CD4-positive, alpha-beta T cell (primary cell): ENCODE measurements at regions of chr19 and their contacts with region 1.

Region 1: DNA sequence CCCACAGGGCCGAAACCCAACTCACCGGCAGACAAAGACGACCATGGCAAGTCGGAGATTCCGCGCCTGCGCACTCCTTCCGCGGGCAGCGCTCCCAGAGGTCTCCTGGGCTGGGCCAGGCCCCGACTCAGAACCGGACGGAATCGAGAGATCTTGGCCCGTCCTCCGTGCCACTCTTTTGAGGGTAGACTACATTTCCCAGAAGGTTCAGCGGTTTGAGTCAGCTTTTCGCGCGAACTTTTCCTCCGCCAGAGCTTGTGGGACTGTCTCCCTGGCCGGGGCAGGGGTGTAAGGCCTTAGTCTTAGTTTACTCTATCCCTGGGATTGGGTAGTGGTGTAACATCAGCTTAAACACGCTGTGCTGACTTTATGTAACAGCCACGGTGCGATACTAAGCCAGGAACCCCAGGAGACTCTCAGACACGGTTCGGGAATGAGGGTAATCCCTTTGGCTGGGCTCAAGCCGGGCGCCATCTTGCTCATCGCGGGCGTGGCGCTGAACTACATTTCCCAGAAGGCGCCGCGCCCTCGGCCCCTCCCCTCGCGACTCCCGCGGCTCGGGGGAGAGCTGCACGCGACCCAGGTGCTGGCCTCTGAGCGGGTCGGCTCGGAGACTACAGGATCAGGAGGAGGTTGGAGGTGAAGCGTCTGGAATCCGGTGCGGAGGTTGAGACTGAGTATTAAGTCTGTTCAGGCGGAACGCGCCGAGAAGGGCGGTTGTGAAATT is at the start of gene ZNF260:
- DNase-seq: peak; percentile 82 to 97 (median 88)
- ATAC-seq: peak; percentile 87
- H3K4me3 ChIP-seq: peak within 1 kb of the TSS; percentile 80
- H3K4me3 Mint-ChIP-seq: peak within 1 kb of the TSS; percentile 97
- H3K27ac ChIP-seq: peak within 1 kb of the TSS; percentile 72 to 90
- H3K27ac Mint-ChIP-seq: peak within 1 kb of the TSS; percentile 93
- H3K4me1 ChIP-seq: peaks cover 19% of the 10 kb centered on the region
- H3K4me1 Mint-ChIP-seq: peaks cover 29% of the 10 kb centered on the region
- H3K27me3 ChIP-seq: no peaks in the 10 kb centered on the region
- H3K27me3 Mint-ChIP-seq: no peaks in the 10 kb centered on the region
- CTCF ChIP-seq: no peak
- total RNA-seq, gene ZNF260: 2.0 to 5.0 TPM

Region 2: GRCh38 chr19:36132489-36132891 is 395.9 kb before region 1 on chr19:
- CTCF ChIA-PET with region 1: no interaction called
- POLR2A ChIA-PET with region 1: no interaction called
- intact Hi-C with region 1: loop called in 1 of 2 experiments (anchors 10 kb)
- DNase-seq: peak in 7 of 14 experiments; percentile 19 to 62 (median 47)
- ATAC-seq: no peak
- H3K4me3 ChIP-seq: no peak overlapping the region
- H3K4me3 Mint-ChIP-seq: no peak overlapping the region
- H3K27ac ChIP-seq: no peak overlapping the region
- H3K27ac Mint-ChIP-seq: no peak overlapping the region
- H3K4me1 ChIP-seq: peaks cover 39% of the 10 kb centered on the region
- H3K4me1 Mint-ChIP-seq: peaks cover 21% of the 10 kb centered on the region
- H3K27me3 ChIP-seq: no peaks in the 10 kb centered on the region
- H3K27me3 Mint-ChIP-seq: no peaks in the 10 kb centered on the region
- CTCF ChIP-seq: no peak

Region 3: GRCh38 chr19:36409841-36410240 is 118.5 kb before region 1 on chr19:
- CTCF ChIA-PET with region 1: no interaction called
- POLR2A ChIA-PET with region 1: no interaction called
- intact Hi-C with region 1: no loop called
- DNase-seq: no peak
- ATAC-seq: no peak
- H3K4me3 ChIP-seq: no peak overlapping the region
- H3K4me3 Mint-ChIP-seq: no peak overlapping the region
- H3K27ac ChIP-seq: no peak overlapping the region
- H3K27ac Mint-ChIP-seq: no peak overlapping the region
- H3K4me1 ChIP-seq: no peaks in the 10 kb centered on the region
- H3K4me1 Mint-ChIP-seq: no peaks in the 10 kb centered on the region
- H3K27me3 ChIP-seq: no peaks in the 10 kb centered on the region
- H3K27me3 Mint-ChIP-seq: no peaks in the 10 kb centered on the region
- CTCF ChIP-seq: no peak

Region 4: GRCh38 chr19:36489118-36489919 is 39.0 kb before region 1 on chr19 and contains the start of gene ZNF566:
- CTCF ChIA-PET with region 1: interaction called, 11 read pairs
- POLR2A ChIA-PET with region 1: interaction called, 53 read pairs
- intact Hi-C with region 1: loop called (anchors 1 kb)
- DNase-seq: peak; percentile 84 to 97 (median 89)
- ATAC-seq: peak; percentile 90
- H3K4me3 ChIP-seq: peak within 1 kb of the TSS; percentile 64
- H3K4me3 Mint-ChIP-seq: peak within 1 kb of the TSS; percentile 97
- H3K27ac ChIP-seq: peak within 1 kb of the TSS; percentile 84 to 87
- H3K27ac Mint-ChIP-seq: peak within 1 kb of the TSS; percentile 99
- H3K4me1 ChIP-seq: peaks cover 19% of the 10 kb centered on the region
- H3K4me1 Mint-ChIP-seq: peaks cover 36% of the 10 kb centered on the region
- H3K27me3 ChIP-seq: no peaks in the 10 kb centered on the region
- H3K27me3 Mint-ChIP-seq: no peaks in the 10 kb centered on the region
- CTCF ChIP-seq: no peak
- total RNA-seq, gene ZNF566: 6.3 to 6.8 TPM

Region 5: DNA sequence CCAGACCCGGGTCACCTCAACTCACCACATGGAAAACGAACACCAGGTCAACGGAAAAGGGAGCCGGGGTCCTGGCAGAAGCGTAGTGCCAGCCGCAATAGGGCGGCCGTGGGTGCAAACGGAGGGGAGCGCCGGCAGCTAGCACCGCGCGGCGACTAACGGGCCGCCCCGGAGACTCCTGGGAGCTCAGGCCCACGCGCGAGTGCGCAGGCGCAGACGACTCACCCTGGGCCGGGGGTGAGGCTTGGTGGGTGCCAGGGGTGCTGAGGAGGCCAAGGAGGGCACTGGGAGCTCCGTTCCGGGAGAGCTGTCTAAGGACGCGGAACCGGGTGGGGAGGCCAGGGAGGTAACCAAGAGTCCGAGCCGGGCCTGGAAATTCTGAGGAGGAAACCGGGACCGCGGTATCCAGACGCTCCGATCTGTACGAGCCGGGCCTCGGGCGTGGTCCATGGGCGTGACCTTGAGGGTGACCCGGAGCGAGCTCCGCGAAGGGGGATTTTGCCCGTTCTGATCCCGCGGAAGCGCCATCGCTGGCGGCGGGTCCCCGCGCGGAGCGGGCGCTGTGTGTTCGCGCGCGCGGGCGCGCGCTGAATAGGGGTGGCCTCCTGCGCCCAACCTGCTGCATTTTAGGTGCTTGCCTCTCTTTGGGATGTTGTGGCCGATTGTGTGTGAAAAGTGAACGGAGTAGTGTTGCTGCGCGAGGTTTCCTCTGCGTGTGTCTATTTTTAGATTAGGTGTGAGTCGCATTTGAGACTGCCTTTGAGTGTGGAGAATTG is 76.9 kb after region 1 on chr19 and contains the start of gene ZNF382:
- CTCF ChIA-PET with region 1: no interaction called
- POLR2A ChIA-PET with region 1: interaction called, 21 read pairs
- intact Hi-C with region 1: loop called (anchors 2 kb)
- DNase-seq: peak; percentile 74 to 92 (median 85)
- ATAC-seq: peak; percentile 75
- H3K4me3 ChIP-seq: peak within 1 kb of the TSS; percentile 87
- H3K4me3 Mint-ChIP-seq: peak within 1 kb of the TSS; percentile 85
- H3K27ac ChIP-seq: peak within 1 kb of the TSS; percentile 92 to 95
- H3K27ac Mint-ChIP-seq: peak within 1 kb of the TSS; percentile 83
- H3K4me1 ChIP-seq: peaks cover 10% of the 10 kb centered on the region
- H3K4me1 Mint-ChIP-seq: peaks cover 28% of the 10 kb centered on the region
- H3K27me3 ChIP-seq: no peaks in the 10 kb centered on the region
- H3K27me3 Mint-ChIP-seq: no peaks in the 10 kb centered on the region
- CTCF ChIP-seq: no peak
- total RNA-seq, gene ZNF382: 4.2 to 4.4 TPM

Region 6: DNA sequence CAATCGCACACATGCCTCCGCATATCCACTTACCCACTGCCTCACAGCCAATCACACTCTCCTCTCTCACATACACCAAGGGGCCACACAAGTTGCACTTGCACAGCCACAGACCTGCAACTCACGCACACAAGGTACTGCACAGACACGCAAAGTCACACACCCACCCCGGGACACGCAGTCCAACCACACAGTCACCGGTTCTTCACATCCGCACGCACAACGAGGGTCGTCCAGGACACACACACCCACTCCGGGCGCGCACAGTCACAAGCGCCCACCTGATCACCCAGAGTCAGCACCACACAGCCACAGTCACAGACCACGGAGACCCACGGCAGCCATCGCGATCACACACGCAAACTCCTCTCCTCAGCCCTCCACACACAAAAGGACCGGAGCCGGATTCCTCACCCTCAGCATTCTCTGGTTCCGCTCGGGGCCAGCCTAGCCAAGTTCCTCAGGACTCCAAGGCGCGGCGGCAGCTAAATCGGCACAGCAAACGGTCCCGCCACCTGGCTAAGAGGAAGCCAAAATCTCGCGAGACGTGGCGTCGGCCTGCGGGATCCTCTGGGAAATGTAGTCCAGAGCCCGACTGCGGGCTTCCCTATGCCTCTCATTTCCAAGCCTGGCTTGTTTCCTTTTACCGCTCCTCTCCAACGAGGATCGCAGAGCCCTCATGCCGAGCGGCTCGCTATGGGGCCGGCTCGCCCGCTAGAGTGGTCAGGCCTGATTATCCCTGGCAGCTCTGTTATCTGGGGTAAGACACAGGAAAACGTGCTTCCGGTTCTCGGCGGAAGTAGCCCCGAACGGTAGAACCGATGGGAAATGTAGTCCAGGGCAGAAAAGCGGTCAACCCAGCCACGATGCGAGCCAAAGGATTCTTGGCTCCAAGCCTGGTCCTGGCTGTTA is 244.2 kb after region 1 on chr19 and contains the start of gene ZNF850:
- CTCF ChIA-PET with region 1: no interaction called
- POLR2A ChIA-PET with region 1: no interaction called
- intact Hi-C with region 1: loop called in 1 of 2 experiments (anchors 1 kb)
- DNase-seq: peak; percentile 87 to 96 (median 93)
- ATAC-seq: peak; percentile 94
- H3K4me3 ChIP-seq: peak within 1 kb of the TSS; percentile 91
- H3K4me3 Mint-ChIP-seq: peak within 1 kb of the TSS; percentile 95
- H3K27ac ChIP-seq: peak within 1 kb of the TSS; percentile 78 to 94
- H3K27ac Mint-ChIP-seq: peak within 1 kb of the TSS; percentile 84
- H3K4me1 ChIP-seq: peaks cover 20% of the 10 kb centered on the region
- H3K4me1 Mint-ChIP-seq: peaks cover 20% of the 10 kb centered on the region
- H3K27me3 ChIP-seq: no peaks in the 10 kb centered on the region
- H3K27me3 Mint-ChIP-seq: no peaks in the 10 kb centered on the region
- CTCF ChIP-seq: no peak
- total RNA-seq, gene ZNF850: 0.77 to 2.1 TPM

Region 7: DNA sequence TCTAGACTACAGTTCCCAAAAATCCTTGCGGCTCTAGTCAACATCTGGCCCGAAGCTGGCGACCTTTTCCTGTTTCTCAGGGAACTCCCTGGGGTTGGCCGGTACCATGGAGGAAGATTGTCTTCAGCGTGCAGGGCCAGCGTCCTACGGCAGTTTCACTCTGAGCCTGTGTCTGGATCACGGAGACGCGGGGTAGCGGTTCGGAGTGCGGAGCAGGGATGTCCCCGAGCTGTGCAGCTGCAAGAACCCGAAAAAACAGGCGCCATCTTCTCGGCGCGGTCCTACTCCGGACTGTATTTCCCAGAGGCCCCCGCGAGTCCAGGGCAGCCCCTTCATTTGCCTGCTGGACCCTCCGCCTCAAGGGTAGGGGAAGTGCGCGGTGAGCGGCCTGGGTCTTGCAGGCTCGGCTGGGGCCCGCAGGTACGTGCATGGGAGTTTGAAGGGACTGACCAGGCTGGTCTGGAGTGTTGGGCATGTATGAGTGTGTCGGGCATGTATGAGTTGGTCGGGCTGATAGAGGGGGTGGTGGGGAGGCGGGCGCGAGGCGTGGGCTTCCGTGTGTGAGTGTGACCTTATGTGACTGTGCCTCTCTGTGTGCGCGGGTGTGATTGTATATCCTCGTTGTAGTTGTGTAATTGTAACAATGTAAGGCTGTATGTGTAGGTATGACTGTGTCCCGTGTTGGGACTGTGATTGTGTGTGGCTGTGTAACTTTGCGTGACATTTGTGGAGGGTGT is 689.7 kb after region 1 on chr19 and contains the start of gene ZNF383:
- CTCF ChIA-PET with region 1: no interaction called
- POLR2A ChIA-PET with region 1: interaction called, 4 read pairs
- intact Hi-C with region 1: loop called in 1 of 2 experiments (anchors 10 kb)
- DNase-seq: peak; percentile 66 to 90 (median 78)
- ATAC-seq: peak; percentile 81
- H3K4me3 ChIP-seq: peak within 1 kb of the TSS; percentile 94
- H3K4me3 Mint-ChIP-seq: peak within 1 kb of the TSS; percentile 93
- H3K27ac ChIP-seq: peak within 1 kb of the TSS; percentile 81 to 90
- H3K27ac Mint-ChIP-seq: peak within 1 kb of the TSS; percentile 89
- H3K4me1 ChIP-seq: peaks cover 14% of the 10 kb centered on the region
- H3K4me1 Mint-ChIP-seq: peaks cover 42% of the 10 kb centered on the region
- H3K27me3 ChIP-seq: no peaks in the 10 kb centered on the region
- H3K27me3 Mint-ChIP-seq: no peaks in the 10 kb centered on the region
- CTCF ChIP-seq: no peak
- total RNA-seq, gene ZNF383: 13.1 to 15.7 TPM